PC-3 (cell line): ENCODE measurements at regions of chr1 and their contacts with region 1.

Region 1: DNA sequence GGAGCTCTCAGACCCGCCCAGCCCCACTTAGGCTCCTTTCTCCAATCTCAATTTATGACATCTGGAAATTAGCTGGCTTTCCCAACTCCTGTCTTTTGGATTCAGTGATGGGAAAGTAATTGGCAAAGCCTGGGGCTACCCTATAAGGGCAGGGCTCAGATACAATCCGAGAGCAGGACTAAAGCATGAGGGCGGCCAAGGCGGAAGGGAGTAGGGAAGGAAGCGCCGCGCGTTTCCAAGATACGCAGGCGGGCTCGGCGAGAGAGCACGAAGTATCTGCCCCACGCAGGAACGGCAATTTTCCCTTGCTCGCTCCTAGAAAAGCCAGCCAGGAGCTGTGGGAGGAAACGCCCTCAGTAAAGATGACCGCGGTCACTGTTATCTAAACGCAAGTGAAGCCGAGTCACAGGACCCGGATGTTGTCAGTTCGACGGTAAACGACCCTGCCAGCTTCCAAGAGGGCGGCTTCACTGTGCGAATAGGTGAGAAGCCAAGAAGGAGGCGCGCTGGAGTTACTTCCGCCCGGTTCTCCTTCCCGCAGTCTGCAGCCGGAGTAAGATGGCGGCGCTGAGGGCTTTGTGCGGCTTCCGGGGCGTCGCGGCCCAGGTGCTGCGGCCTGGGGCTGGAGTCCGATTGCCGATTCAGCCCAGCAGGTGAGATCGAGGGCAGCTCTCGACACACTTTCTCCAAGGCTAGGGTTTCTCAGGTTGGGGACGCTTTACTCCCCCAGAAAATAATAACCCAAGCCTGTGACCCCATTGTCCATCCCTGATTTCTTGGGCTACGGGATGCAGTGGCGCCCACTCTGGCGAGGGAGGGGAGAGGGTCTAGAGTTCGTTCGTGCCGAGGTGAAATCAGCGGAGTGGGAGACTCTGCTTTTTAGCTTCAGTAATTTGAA is at the start of gene NDUFS2:
- DNase-seq: peak; percentile 99
- ATAC-seq: peak; percentile 96
- H3K4me3 ChIP-seq: peak within 1 kb of the TSS; percentile 81
- H3K27ac ChIP-seq: peak within 1 kb of the TSS; percentile 60
- H3K4me1 ChIP-seq: peaks cover 26% of the 10 kb centered on the region
- H3K27me3 ChIP-seq: no peaks in the 10 kb centered on the region
- CTCF ChIP-seq: peak; percentile 59
- total RNA-seq, gene NDUFS2: 168 TPM in 2 replicates

Region 2: DNA sequence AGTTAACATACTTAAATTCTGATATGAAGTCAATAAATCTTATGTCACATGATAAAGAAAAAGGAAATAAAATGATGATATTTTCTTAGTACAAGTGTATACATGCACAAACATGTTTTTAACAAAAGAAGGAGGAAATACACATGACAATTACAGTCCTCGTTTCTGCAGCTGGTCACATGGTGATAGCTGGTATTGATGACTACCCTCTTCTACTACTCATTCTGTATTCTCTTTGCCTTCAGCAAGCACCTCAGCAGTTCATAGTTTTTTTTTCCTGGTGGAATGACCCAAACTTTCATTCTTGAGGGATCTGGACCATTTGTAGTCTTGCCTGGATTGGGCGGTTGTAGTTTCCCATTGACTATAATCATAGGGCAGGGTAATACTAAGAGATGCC is 230.0 kb after region 1 on chr1:
- CTCF ChIA-PET with region 1: no interaction called
- POLR2A ChIA-PET with region 1: interaction called, 11 read pairs
- intact Hi-C with region 1: no loop called
- DNase-seq: no peak
- ATAC-seq: no peak
- H3K4me3 ChIP-seq: no peak overlapping the region
- H3K27ac ChIP-seq: no peak overlapping the region
- H3K4me1 ChIP-seq: no peaks in the 10 kb centered on the region
- H3K27me3 ChIP-seq: no peaks in the 10 kb centered on the region
- CTCF ChIP-seq: no peak